ENCODE measurements at regions of chr4 and their contacts with region 1.

Region 1: DNA sequence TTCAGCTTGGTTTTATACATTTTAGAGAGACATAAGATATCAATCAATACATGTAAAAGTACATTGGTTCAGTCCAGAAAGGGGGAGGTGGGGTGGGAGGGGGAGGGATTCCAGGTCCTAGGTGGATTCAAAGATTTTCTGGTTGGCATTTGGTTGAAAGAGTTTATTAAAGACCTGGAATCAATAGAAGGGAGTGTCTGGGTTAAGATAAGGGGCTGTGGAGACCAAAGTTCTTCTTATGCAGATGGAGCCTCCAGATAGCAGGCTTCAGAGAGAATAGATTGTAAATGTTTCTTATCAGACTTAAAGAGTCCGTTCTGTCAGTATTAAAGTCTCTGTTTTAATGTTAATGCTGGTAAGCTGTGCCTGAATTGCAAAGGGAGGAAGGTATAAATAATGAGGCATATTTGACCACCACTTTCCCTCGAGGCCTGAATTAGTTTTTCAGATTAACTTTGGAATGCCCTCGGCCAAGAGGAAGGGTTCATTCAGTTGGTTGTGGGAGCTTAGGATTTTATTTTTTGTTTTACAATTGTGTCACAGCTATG is 169.9 kb downstream of the AASDH start:
- DNase-seq: peak; percentile 42 to 46
- H3K4me3 ChIP-seq: no peak overlapping the region
- H3K4me3 Mint-ChIP-seq: peak overlapping the region; percentile 55
- H3K27ac Mint-ChIP-seq: peak overlapping the region; percentile 74
- H3K4me1 ChIP-seq: peaks cover 39% of the 10 kb centered on the region
- H3K4me1 Mint-ChIP-seq: peaks cover 39% of the 10 kb centered on the region
- H3K27me3 ChIP-seq: no peaks in the 10 kb centered on the region
- H3K27me3 Mint-ChIP-seq: no peaks in the 10 kb centered on the region
- CTCF ChIP-seq: no peak

Region 2: GRCh38 chr4:56235011-56235410 is 17.6 kb after region 1 on chr4:
- CTCF ChIA-PET with region 1: no interaction called
- POLR2A ChIA-PET with region 1: no interaction called
- intact Hi-C with region 1: loop called (anchors 1 kb)
- DNase-seq: peak in 1 of 2 experiments; percentile 32
- H3K4me3 ChIP-seq: no peak overlapping the region
- H3K4me3 Mint-ChIP-seq: peak overlapping the region; percentile 52
- H3K27ac Mint-ChIP-seq: peak overlapping the region; percentile 81
- H3K4me1 ChIP-seq: peaks cover 52% of the 10 kb centered on the region
- H3K4me1 Mint-ChIP-seq: peaks cover 47% of the 10 kb centered on the region
- H3K27me3 ChIP-seq: no peaks in the 10 kb centered on the region
- H3K27me3 Mint-ChIP-seq: no peaks in the 10 kb centered on the region
- CTCF ChIP-seq: no peak

Region 3: GRCh38 chr4:56240554-56241174 is 23.2 kb after region 1 on chr4:
- CTCF ChIA-PET with region 1: no interaction called
- POLR2A ChIA-PET with region 1: no interaction called
- intact Hi-C with region 1: loop called (anchors 1 kb)
- DNase-seq: peak; percentile 54 to 83
- H3K4me3 ChIP-seq: peak overlapping the region; percentile 12; the same call in 1 of the 2 replicates
- H3K4me3 Mint-ChIP-seq: peak overlapping the region; percentile 64
- H3K27ac Mint-ChIP-seq: peak overlapping the region; percentile 88
- H3K4me1 ChIP-seq: peaks cover 83% of the 10 kb centered on the region
- H3K4me1 Mint-ChIP-seq: peaks cover 68% of the 10 kb centered on the region
- H3K27me3 ChIP-seq: no peaks in the 10 kb centered on the region
- H3K27me3 Mint-ChIP-seq: no peaks in the 10 kb centered on the region
- CTCF ChIP-seq: no peak

Measured in Caco-2 (cell line).